CD8-positive, alpha-beta T cell (primary cell): ENCODE measurements at regions of chr5 and their contacts with region 1.

Region 1: GRCh38 chr5:157180374-157181264 is at the start of gene ITK:
- DNase-seq: peak in 5 of 9 experiments; percentile 39 to 90 (median 73)
- ATAC-seq: peak; percentile 76
- H3K4me3 ChIP-seq: peak within 1 kb of the TSS; percentile 78 to 84
- H3K4me3 Mint-ChIP-seq: peak within 1 kb of the TSS; percentile 93
- H3K27ac ChIP-seq: peak within 1 kb of the TSS; percentile 79 to 80
- H3K27ac Mint-ChIP-seq: peak within 1 kb of the TSS; percentile 95
- H3K4me1 ChIP-seq: peaks cover 39% of the 10 kb centered on the region
- H3K4me1 Mint-ChIP-seq: peaks cover 55% of the 10 kb centered on the region
- H3K27me3 ChIP-seq: no peaks in the 10 kb centered on the region
- H3K27me3 Mint-ChIP-seq: no peaks in the 10 kb centered on the region
- CTCF ChIP-seq: no peak
- total RNA-seq, gene ITK: 222 to 231 TPM

Region 2: GRCh38 chr5:156947796-156948324 is 232.8 kb before region 1 on chr5:
- CTCF ChIA-PET with region 1: no interaction called
- POLR2A ChIA-PET with region 1: no interaction called
- intact Hi-C with region 1: loop called in 1 of 2 experiments (anchors 5 kb)
- DNase-seq: no peak
- ATAC-seq: no peak
- H3K4me3 ChIP-seq: no peak overlapping the region
- H3K4me3 Mint-ChIP-seq: no peak overlapping the region
- H3K27ac ChIP-seq: no peak overlapping the region
- H3K27ac Mint-ChIP-seq: no peak overlapping the region
- H3K4me1 ChIP-seq: no peaks in the 10 kb centered on the region
- H3K4me1 Mint-ChIP-seq: peaks cover 13% of the 10 kb centered on the region
- H3K27me3 ChIP-seq: no peaks in the 10 kb centered on the region
- H3K27me3 Mint-ChIP-seq: no peaks in the 10 kb centered on the region
- CTCF ChIP-seq: no peak

Region 3: GRCh38 chr5:157159209-157159751 is 21.3 kb before region 1 on chr5:
- CTCF ChIA-PET with region 1: interaction called, 4 read pairs
- POLR2A ChIA-PET with region 1: interaction called, 6 read pairs
- intact Hi-C with region 1: loop called in 1 of 2 experiments (anchors 1 kb)
- DNase-seq: peak in 6 of 9 experiments; percentile 29 to 72 (median 53)
- ATAC-seq: peak; percentile 81
- H3K4me3 ChIP-seq: no peak overlapping the region
- H3K4me3 Mint-ChIP-seq: peak overlapping the region; percentile 13
- H3K27ac ChIP-seq: peak overlapping the region; percentile 23 to 78
- H3K27ac Mint-ChIP-seq: peak overlapping the region; percentile 58
- H3K4me1 ChIP-seq: peaks cover 38% of the 10 kb centered on the region
- H3K4me1 Mint-ChIP-seq: peaks cover 62% of the 10 kb centered on the region
- H3K27me3 ChIP-seq: no peaks in the 10 kb centered on the region
- H3K27me3 Mint-ChIP-seq: no peaks in the 10 kb centered on the region
- CTCF ChIP-seq: no peak

Region 4: GRCh38 chr5:157167214-157167621 is 13.4 kb before region 1 on chr5:
- CTCF ChIA-PET with region 1: interaction called, 3 read pairs
- POLR2A ChIA-PET with region 1: interaction called, 13 read pairs
- intact Hi-C with region 1: loop called in 1 of 2 experiments (anchors 1 kb)
- DNase-seq: no peak
- ATAC-seq: no peak
- H3K4me3 ChIP-seq: no peak overlapping the region
- H3K4me3 Mint-ChIP-seq: peak overlapping the region; percentile 72
- H3K27ac ChIP-seq: peak overlapping the region in 1 of 2 experiments; percentile 21
- H3K27ac Mint-ChIP-seq: peak overlapping the region; percentile 89
- H3K4me1 ChIP-seq: peaks cover 26% of the 10 kb centered on the region
- H3K4me1 Mint-ChIP-seq: peaks cover 53% of the 10 kb centered on the region
- H3K27me3 ChIP-seq: no peaks in the 10 kb centered on the region
- H3K27me3 Mint-ChIP-seq: no peaks in the 10 kb centered on the region
- CTCF ChIP-seq: no peak

Region 5: DNA sequence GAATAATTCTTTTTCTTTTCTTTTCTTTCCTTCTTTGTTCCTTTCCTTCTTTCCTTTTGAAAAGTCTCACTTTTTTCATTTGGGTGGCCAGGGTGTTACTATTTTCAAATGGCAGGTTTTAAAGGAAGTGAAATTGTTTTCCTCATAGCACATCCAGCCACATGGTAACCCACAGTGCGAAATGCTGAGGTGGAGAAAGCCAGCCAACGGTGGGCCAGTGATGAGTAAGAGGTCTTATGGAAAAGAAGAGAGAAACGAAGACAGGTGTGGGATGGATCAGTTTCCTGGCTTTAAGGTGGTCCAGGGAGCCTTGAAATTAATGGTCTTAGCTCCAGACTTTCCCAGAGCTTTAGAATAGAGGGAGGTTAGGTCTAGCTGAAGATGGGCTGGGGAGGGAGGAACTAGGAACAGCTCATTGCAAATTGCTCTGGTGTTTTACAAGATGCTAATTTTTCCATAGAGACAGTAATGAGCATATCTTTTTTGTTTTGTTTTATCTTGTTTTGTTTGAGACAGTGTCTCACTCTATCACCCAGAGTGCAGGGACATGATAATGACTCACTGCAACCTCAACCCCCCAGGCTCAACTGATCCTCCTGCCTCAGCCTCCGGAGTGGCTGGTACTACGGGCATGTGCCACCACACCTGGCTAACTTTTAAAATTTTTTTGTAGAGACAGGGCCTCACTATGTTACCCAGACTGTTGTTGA is 17.8 kb after region 1 on chr5:
- CTCF ChIA-PET with region 1: interaction called, 8 read pairs
- POLR2A ChIA-PET with region 1: interaction called, 52 read pairs
- intact Hi-C with region 1: loop called (anchors 1 to 2 kb)
- DNase-seq: peak in 6 of 9 experiments; percentile 42 to 84 (median 66)
- ATAC-seq: peak; percentile 60
- H3K4me3 ChIP-seq: no peak overlapping the region
- H3K4me3 Mint-ChIP-seq: peak overlapping the region; percentile 63
- H3K27ac ChIP-seq: peak overlapping the region; percentile 32 to 83
- H3K27ac Mint-ChIP-seq: peak overlapping the region; percentile 94
- H3K4me1 ChIP-seq: peaks cover 97% of the 10 kb centered on the region
- H3K4me1 Mint-ChIP-seq: peaks cover 93% of the 10 kb centered on the region
- H3K27me3 ChIP-seq: no peaks in the 10 kb centered on the region
- H3K27me3 Mint-ChIP-seq: no peaks in the 10 kb centered on the region
- CTCF ChIP-seq: no peak

Region 6: GRCh38 chr5:157204765-157205164 is 24.1 kb after region 1 on chr5:
- CTCF ChIA-PET with region 1: interaction called, 8 read pairs
- POLR2A ChIA-PET with region 1: interaction called, 23 read pairs
- intact Hi-C with region 1: no loop called
- DNase-seq: peak in 3 of 9 experiments; percentile 41 to 81 (median 60)
- ATAC-seq: peak; percentile 53
- H3K4me3 ChIP-seq: peak overlapping the region in 1 of 2 experiments; percentile 35
- H3K4me3 Mint-ChIP-seq: peak overlapping the region; percentile 54
- H3K27ac ChIP-seq: peak overlapping the region; percentile 34 to 74
- H3K27ac Mint-ChIP-seq: peak overlapping the region; percentile 92
- H3K4me1 ChIP-seq: peaks cover 96% of the 10 kb centered on the region
- H3K4me1 Mint-ChIP-seq: peaks cover 85% of the 10 kb centered on the region
- H3K27me3 ChIP-seq: no peaks in the 10 kb centered on the region
- H3K27me3 Mint-ChIP-seq: no peaks in the 10 kb centered on the region
- CTCF ChIP-seq: no peak

Region 7: GRCh38 chr5:157877821-157878220 is 697.2 kb after region 1 on chr5:
- CTCF ChIA-PET with region 1: no interaction called
- POLR2A ChIA-PET with region 1: no interaction called
- intact Hi-C with region 1: no loop called
- DNase-seq: no peak
- ATAC-seq: no peak
- H3K4me3 ChIP-seq: no peak overlapping the region
- H3K4me3 Mint-ChIP-seq: no peak overlapping the region
- H3K27ac ChIP-seq: no peak overlapping the region
- H3K27ac Mint-ChIP-seq: no peak overlapping the region
- H3K4me1 ChIP-seq: no peaks in the 10 kb centered on the region
- H3K4me1 Mint-ChIP-seq: no peaks in the 10 kb centered on the region
- H3K27me3 ChIP-seq: no peaks in the 10 kb centered on the region
- H3K27me3 Mint-ChIP-seq: no peaks in the 10 kb centered on the region
- CTCF ChIP-seq: no peak